ENCODE measurements at regions of chr6 and their contacts with region 1.

Region 1: GRCh38 chr6:108592371-108593337 is 31.9 kb downstream of the FOXO3 start:
- DNase-seq: peak; percentile 93
- H3K4me3 ChIP-seq: peak overlapping the region; percentile 45
- H3K27ac ChIP-seq: peak overlapping the region; percentile 76
- H3K4me1 ChIP-seq: peaks cover 100% of the 10 kb centered on the region
- CTCF ChIP-seq: no peak

Region 2: GRCh38 chr6:108463784-108464183 is 128.9 kb before region 1 on chr6:
- CTCF ChIA-PET with region 1: no interaction called
- POLR2A ChIA-PET with region 1: no interaction called
- intact Hi-C with region 1: no loop called
- DNase-seq: no peak
- H3K4me3 ChIP-seq: no peak overlapping the region
- H3K27ac ChIP-seq: no peak overlapping the region
- H3K4me1 ChIP-seq: peaks cover 11% of the 10 kb centered on the region
- CTCF ChIP-seq: no peak

Region 3: GRCh38 chr6:108558372-108559096 is 34.1 kb before region 1 on chr6:
- CTCF ChIA-PET with region 1: interaction called, 3 read pairs
- POLR2A ChIA-PET with region 1: interaction called, 5 read pairs
- intact Hi-C with region 1: loop called (anchors 1 kb)
- DNase-seq: peak; percentile 99
- H3K4me3 ChIP-seq: peak overlapping the region; percentile 91
- H3K27ac ChIP-seq: peak overlapping the region; percentile 64
- H3K4me1 ChIP-seq: peaks cover 12% of the 10 kb centered on the region
- CTCF ChIP-seq: 0 out of 2 replicates have a peak, but pooled peaks have one; percentile 3

Region 4: GRCh38 chr6:108565893-108566292 is 26.8 kb before region 1 on chr6:
- CTCF ChIA-PET with region 1: interaction called, 3 read pairs
- POLR2A ChIA-PET with region 1: interaction called, 9 read pairs
- intact Hi-C with region 1: loop called (anchors 1 kb)
- DNase-seq: peak; percentile 76
- H3K4me3 ChIP-seq: peak overlapping the region; percentile 53
- H3K27ac ChIP-seq: peak overlapping the region; percentile 71
- H3K4me1 ChIP-seq: peaks cover 37% of the 10 kb centered on the region
- CTCF ChIP-seq: peak; percentile 48; the same call in 1 of the 2 replicates

Region 5: DNA sequence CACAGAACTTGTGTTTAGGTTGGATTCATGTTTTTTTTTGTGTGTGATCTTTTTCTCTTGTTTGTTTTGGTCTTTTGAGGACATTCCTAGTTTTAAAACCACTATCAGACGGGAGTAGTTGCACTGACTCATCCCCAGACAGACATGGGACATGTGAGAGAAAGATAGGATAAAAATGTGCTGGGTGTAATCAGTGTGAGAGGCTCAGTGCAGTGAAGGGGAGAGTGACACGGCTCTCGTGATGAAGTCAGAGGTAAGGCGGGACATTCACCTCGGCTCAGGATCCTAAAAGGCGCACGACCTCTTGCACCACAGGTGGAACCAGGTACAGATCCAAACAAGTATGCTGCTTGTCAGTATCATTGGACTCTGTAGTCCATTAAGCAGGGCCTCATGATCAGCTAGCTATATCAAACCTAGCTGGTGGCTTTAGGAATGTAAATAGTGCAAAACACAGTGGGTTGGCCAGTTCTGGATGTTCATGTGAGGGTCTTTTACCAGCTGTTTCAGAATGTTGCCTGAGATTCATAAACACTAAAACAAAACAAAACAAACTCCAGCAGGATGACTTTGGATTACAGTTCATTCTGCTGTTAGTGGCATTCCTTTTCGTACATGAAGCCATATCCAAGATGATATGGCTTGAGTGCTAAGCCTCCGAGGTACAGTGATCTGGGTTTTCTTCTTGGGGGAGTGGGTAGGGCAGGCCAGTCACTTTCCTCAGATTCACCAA is 13.9 kb before region 1 on chr6:
- CTCF ChIA-PET with region 1: interaction called, 3 read pairs
- POLR2A ChIA-PET with region 1: interaction called, 17 read pairs
- intact Hi-C with region 1: no loop called
- DNase-seq: no peak
- H3K4me3 ChIP-seq: no peak overlapping the region
- H3K27ac ChIP-seq: no peak overlapping the region
- H3K4me1 ChIP-seq: peaks cover 6% of the 10 kb centered on the region
- CTCF ChIP-seq: no peak

Region 6: DNA sequence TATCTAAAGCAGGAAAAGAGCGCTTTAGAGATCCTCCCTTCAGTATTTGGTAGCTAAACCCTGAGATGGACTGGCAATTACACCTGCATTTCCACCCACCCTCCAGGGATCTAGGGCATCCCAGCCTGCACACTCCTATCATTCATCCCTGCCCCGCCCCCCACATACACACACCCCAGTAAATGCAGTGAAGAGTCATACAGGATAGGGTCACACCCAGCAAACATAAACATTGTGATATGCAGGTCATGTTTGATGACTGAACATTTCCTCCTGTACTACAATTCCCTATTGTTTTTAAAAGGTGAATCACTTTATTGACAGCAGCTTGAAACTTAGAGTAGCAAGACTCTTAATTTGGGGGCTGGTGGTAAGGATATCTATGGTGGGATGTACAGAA is 80.9 kb after region 1 on chr6:
- CTCF ChIA-PET with region 1: interaction called, 3 read pairs
- POLR2A ChIA-PET with region 1: interaction called, 4 read pairs
- intact Hi-C with region 1: loop called (anchors 1 kb)
- DNase-seq: no peak
- H3K4me3 ChIP-seq: peak overlapping the region; percentile 4
- H3K27ac ChIP-seq: peak overlapping the region; percentile 44
- H3K4me1 ChIP-seq: peaks cover 40% of the 10 kb centered on the region
- CTCF ChIP-seq: no peak

Region 7: DNA sequence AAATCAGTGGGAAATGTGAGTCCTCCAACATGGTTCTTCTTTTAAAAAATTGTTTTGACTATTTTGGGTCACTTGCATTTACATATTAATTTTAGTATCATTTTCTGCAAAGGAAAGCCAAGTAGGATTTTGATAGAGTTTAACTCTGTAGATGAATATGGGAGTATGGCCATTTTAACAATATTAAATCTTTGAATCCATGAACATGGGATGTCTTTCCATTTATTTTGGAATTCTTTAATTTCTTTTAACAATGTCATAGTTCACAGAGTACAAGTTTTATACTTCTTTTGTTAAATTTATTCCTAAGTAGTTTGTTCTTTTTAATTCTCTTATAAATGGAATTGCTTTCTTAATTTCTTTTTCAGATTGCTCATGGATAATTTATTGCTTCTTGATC is 199.0 kb after region 1 on chr6:
- CTCF ChIA-PET with region 1: no interaction called
- POLR2A ChIA-PET with region 1: no interaction called
- intact Hi-C with region 1: no loop called
- DNase-seq: no peak
- H3K4me3 ChIP-seq: no peak overlapping the region
- H3K27ac ChIP-seq: no peak overlapping the region
- H3K4me1 ChIP-seq: no peaks in the 10 kb centered on the region
- CTCF ChIP-seq: no peak

Measured in OCI-LY7 (cell line).